Adrenal gland (tissue), 19 donors: ENCODE measurements at regions of chr13 and their contacts with region 1.

Region 1: DNA sequence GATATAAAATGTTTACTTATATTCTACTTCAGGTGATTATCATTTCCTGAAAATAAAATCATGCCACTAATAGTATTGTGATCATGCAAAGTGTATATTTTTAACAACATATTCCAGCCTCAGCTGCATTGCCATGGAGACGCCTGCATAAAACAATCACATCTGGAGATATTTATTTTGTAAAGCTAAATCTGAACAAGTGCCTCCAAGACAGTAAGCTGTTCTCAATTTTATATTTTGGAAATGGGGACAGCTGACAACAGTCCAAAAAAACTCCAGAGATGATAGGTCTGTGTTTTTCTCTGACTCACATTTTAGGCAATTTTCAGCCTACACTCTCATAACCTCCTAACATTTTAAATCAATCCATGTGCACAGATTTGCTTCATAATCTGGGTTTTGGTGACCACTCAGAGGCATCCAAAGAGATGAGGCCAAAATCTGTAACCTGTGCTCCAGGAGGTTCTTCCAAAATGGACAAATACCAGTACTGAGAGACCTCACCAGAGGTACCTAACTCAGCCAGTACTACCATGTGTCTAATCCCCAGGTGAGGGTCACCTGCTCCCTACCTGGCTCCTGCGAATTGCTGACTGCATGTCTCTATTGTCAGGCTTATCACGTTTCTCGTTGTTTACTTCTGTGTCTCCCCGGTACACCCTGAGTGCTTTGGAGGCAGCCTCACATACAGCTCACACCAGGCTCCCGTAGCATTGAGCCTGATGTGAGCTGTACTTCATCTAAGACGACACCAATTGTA is 62.7 kb downstream of the COL4A1 start:
- DNase-seq: peak in 2 of 7 donors; percentile 14 to 45
- H3K4me3 ChIP-seq: no peak overlapping the region
- H3K27ac ChIP-seq: peak overlapping the region in 2 of 5 donors; percentile 29 to 72
- H3K4me1 ChIP-seq: peaks cover 0 to 31% of the 10 kb centered on the region in 2 donors
- H3K27me3 ChIP-seq: no peaks in the 10 kb centered on the region
- CTCF ChIP-seq: no peak
- POLR2A ChIP-seq: no peak

Region 2: GRCh38 chr13:110103534-110103933 is 140.7 kb before region 1 on chr13:
- intact Hi-C with region 1: no loop called
- DNase-seq: no peak
- H3K4me3 ChIP-seq: no peak overlapping the region
- H3K27ac ChIP-seq: peak overlapping the region in 4 of 5 donors; percentile 20 to 85 (median 48)
- H3K4me1 ChIP-seq: peaks cover 11 to 36% of the 10 kb centered on the region in 2 donors
- H3K27me3 ChIP-seq: no peaks in the 10 kb centered on the region
- CTCF ChIP-seq: no peak
- POLR2A ChIP-seq: no peak

Region 3: DNA sequence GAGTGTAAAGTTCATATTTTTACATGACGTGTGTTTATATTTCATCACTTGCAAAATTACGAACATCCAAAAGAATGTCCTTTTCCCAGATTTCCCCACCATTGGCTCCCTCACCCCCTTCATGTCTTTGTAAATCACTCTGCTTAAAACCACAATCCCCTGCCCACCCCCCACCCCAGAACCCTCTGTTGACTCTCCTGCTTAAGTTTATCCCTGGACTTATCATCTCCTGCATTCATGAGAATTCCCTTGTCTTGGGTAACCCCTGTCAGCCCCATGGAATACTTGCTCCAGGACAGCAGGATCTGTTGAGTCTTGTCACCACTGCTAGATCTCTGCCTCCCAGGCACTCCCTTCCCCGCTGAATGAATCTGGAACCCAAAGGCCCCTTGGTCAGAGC is 47.2 kb before region 1 on chr13:
- intact Hi-C with region 1: no loop called
- DNase-seq: no peak
- H3K4me3 ChIP-seq: no peak overlapping the region
- H3K27ac ChIP-seq: no peak overlapping the region
- H3K4me1 ChIP-seq: no peaks in the 10 kb centered on the region
- H3K27me3 ChIP-seq: no peaks in the 10 kb centered on the region
- CTCF ChIP-seq: no peak
- POLR2A ChIP-seq: no peak

Region 4: DNA sequence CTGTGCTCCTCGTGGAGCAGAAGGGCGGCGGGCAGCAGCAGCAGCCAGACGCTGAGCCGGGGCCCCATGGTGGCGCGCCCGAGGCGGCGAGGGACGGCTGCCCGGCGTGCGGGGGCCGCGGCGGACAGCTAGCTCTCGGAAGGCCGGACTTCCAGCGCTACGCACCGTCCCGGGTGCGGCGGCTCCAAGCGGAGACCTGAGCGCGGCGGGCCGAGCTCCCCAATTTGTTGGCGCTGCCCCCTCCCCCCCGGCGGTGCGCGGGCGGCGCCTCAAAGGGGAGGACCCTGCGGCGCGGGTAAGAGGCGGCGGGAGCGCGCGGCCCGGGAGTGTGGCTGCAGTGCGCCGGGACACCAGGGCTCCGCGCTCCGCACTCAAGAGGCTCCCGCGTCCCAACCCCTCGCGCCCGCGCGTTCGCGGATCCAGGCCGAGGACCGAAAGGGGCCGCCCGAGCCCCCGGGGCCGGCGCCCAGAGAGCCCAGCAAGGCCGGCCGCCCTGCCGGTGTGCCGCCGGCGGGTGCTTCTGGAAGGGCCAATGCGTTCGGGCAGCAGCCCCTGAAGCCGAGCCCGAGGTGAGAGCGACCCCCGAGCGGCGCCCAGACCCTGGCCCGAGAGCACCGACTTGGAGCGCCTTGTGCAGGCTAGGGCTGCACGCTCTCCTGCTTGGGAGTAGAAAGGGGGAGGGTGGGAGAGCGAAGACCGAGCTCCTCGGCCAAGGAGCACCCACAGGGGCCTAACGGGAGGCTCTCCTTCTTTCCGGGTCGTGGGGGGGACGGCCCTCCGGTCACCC is 62.9 kb after region 1 on chr13 and contains the starts of genes COL4A1 and COL4A2:
- intact Hi-C with region 1: loop called in 1 of 2 experiments (anchors 10 kb)
- DNase-seq: peak in 6 of 7 donors; percentile 47 to 77 (median 56)
- H3K4me3 ChIP-seq: peak within 1 kb of the TSS in 2 of 4 donors; percentile 21 to 77
- H3K27ac ChIP-seq: peak within 1 kb of the TSS in 4 of 5 donors; percentile 52 to 89 (median 79)
- H3K4me1 ChIP-seq: peaks cover 0 to 15% of the 10 kb centered on the region in 2 donors
- H3K27me3 ChIP-seq: peaks cover 4% of the 10 kb centered on the region
- CTCF ChIP-seq: no peak
- POLR2A ChIP-seq: peak; percentile 60 to 67
- total RNA-seq, gene COL4A1: 124 to 364 (median 197) TPM
- total RNA-seq, gene COL4A2: 114 to 1,589 (median 177) TPM

Region 5: GRCh38 chr13:110421696-110422385 is 177.6 kb after region 1 on chr13:
- intact Hi-C with region 1: loop called in 1 of 2 experiments (anchors 5 kb)
- DNase-seq: no peak
- H3K4me3 ChIP-seq: no peak overlapping the region
- H3K27ac ChIP-seq: no peak overlapping the region
- H3K4me1 ChIP-seq: peaks cover 6 to 14% of the 10 kb centered on the region in 2 donors
- H3K27me3 ChIP-seq: no peaks in the 10 kb centered on the region
- CTCF ChIP-seq: no peak
- POLR2A ChIP-seq: no peak